ENCODE measurements at regions of chr2 and their contacts with region 1.

Region 1: GRCh38 chr2:43300840-43301583 is 74.6 kb upstream of the ZFP36L2 start:
- DNase-seq: peak in 1 of 2 donors; percentile 80
- H3K4me3 ChIP-seq: peak overlapping the region in 1 of 2 donors; percentile 8
- H3K27ac ChIP-seq: peak overlapping the region; percentile 70 to 84
- H3K4me1 ChIP-seq: peaks cover 18 to 56% of the 10 kb centered on the region in 2 donors
- H3K27me3 ChIP-seq: no peaks in the 10 kb centered on the region
- CTCF ChIP-seq: no peak

Region 2: GRCh38 chr2:43100883-43101662 is 199.9 kb before region 1 on chr2:
- intact Hi-C with region 1: no loop called
- DNase-seq: no peak
- H3K4me3 ChIP-seq: peak overlapping the region; percentile 44 to 65
- H3K27ac ChIP-seq: peak overlapping the region; percentile 94 to 95
- H3K4me1 ChIP-seq: peaks cover 27 to 40% of the 10 kb centered on the region in 2 donors
- H3K27me3 ChIP-seq: no peaks in the 10 kb centered on the region
- CTCF ChIP-seq: no peak

Region 3: GRCh38 chr2:43251171-43251731 is 49.8 kb before region 1 on chr2:
- intact Hi-C with region 1: loop called (anchors 5 kb)
- DNase-seq: no peak
- H3K4me3 ChIP-seq: no peak overlapping the region
- H3K27ac ChIP-seq: peak overlapping the region; percentile 89 to 92
- H3K4me1 ChIP-seq: peaks cover 4 to 19% of the 10 kb centered on the region in 2 donors
- H3K27me3 ChIP-seq: no peaks in the 10 kb centered on the region
- CTCF ChIP-seq: peak in 1 of 3 experiments; percentile 1

Region 4: DNA sequence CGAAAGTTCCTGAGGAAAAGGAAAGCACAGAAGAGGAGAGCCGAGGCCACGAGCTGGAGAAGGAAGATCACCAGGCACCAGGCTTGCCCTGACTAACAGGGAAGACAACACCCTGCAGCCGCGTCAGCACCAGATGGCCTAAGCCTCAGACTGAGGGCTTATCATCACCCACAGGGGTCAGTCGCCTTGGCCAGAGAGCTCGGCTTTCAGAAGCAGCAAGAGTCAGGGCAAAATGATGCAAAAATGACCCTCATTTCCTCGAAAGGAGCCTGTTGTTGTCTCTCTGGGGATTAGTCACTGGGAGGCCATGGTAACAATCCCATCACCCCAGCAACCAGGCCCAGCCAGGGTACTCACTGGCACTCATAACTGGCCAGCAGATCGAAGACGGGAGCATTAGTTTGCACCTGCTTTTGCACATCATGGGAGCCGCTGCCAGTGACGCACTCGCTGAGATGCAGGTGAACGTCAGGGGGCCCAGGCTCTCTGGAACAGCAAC is 31.9 kb before region 1 on chr2:
- intact Hi-C with region 1: loop called (anchors 5 kb)
- DNase-seq: peak; percentile 68 to 95
- H3K4me3 ChIP-seq: peak overlapping the region; percentile 7 to 16
- H3K27ac ChIP-seq: peak overlapping the region; percentile 79 to 90
- H3K4me1 ChIP-seq: peaks cover 24 to 54% of the 10 kb centered on the region in 2 donors
- H3K27me3 ChIP-seq: no peaks in the 10 kb centered on the region
- CTCF ChIP-seq: no peak

Region 5: DNA sequence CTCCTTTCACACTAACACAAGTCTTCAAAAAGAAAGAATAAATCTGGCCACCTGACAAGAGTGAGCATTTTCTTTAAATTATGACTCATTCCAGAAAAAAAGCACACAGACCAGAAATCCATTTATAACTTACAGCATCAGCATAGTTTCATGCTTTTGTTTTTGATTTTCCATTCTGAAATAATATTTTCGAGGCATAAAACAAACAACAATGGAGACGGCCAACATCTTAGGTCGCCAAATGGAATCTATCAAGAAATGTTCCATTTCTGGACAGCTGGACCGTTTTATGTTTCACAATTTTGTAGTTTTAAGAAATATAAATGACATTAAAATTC is 90.8 kb after region 1 on chr2:
- intact Hi-C with region 1: loop called (anchors 5 kb)
- DNase-seq: no peak
- H3K4me3 ChIP-seq: peak overlapping the region in 1 of 2 donors; percentile 2
- H3K27ac ChIP-seq: peak overlapping the region; percentile 76 to 79
- H3K4me1 ChIP-seq: peaks cover 4 to 51% of the 10 kb centered on the region in 2 donors
- H3K27me3 ChIP-seq: no peaks in the 10 kb centered on the region
- CTCF ChIP-seq: no peak

Measured in ascending aorta (tissue), 2 donors.